ENCODE measurements at regions of chr13 and their contacts with region 1.

Region 1: DNA sequence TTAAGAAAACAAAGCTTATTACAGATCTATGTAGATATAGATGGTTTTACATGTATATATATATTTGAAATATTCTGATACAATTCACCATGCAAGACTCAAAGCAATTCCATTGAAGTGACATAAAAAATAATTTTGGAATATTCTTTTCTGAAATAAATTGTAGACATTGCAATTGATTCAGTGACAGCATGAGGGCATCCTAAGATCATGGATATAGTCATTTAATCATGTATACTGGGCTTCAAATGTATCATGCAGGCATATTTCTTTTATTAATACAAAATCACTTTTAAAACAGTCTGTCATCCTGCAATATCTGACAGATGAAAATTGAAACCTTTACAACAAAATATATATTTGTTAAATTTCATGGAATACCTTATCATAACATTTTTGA is 286.7 kb upstream of the SLITRK6 start:
- DNase-seq: no peak
- H3K4me3 ChIP-seq: no peak overlapping the region
- H3K27ac ChIP-seq: no peak overlapping the region
- H3K4me1 ChIP-seq: no peaks in the 10 kb centered on the region
- H3K27me3 ChIP-seq: no peaks in the 10 kb centered on the region
- CTCF ChIP-seq: 0 out of 2 replicates have a peak, but pooled peaks have one; percentile 33

Region 2: DNA sequence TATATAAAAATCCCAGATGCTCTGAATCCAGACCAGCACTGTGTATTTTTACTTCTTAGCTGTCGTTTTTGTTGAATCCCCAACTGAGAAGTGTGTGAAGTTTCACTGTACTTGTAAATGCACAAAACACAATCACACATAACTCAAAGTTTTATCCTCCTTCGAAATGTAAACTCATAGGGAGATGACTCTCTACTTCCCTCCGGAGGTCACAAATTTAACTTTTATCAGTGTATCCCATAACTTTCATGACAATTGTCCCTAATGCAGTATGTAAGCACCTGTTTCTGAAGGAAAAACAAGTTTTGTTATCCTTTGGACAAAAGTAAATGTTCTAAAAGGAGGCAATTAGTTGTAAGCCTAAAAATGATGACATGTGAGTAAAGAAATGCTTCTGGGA is 378.3 kb after region 1 on chr13:
- CTCF ChIA-PET with region 1: no interaction called
- POLR2A ChIA-PET with region 1: no interaction called
- intact Hi-C with region 1: loop called (anchors 10 kb)
- DNase-seq: no peak
- H3K4me3 ChIP-seq: no peak overlapping the region
- H3K27ac ChIP-seq: no peak overlapping the region
- H3K4me1 ChIP-seq: no peaks in the 10 kb centered on the region
- H3K27me3 ChIP-seq: no peaks in the 10 kb centered on the region
- CTCF ChIP-seq: peak; percentile 41; the same call in 1 of the 2 replicates

Region 3: GRCh38 chr13:86689911-86690310 is 604.0 kb after region 1 on chr13:
- CTCF ChIA-PET with region 1: no interaction called
- POLR2A ChIA-PET with region 1: no interaction called
- intact Hi-C with region 1: no loop called
- DNase-seq: no peak
- H3K4me3 ChIP-seq: no peak overlapping the region
- H3K27ac ChIP-seq: no peak overlapping the region
- H3K4me1 ChIP-seq: no peaks in the 10 kb centered on the region
- H3K27me3 ChIP-seq: no peaks in the 10 kb centered on the region
- CTCF ChIP-seq: no peak